CD8-positive, alpha-beta T cell (primary cell): ENCODE measurements at regions of chr1 and their contacts with region 1.

Region 1: DNA sequence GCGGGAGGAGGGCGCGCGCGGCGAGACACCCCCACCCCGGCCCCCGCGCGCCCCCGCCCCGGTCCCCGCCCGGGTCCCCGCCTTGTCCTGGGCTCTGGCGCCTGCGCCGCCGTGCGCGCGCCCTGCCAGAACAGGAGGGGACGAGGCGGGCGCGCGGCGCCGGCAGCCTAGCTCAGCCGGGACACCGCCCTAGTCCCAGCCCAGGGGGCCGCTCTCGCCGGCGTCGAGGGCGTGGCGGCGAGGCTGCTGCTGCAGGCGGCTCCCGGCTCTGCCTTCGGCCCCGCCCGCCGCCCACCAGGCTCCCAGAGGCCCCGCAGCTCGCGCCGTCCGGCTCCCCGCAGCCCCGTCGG is at the start of gene RCAN3:
- DNase-seq: peak; percentile 78 to 95 (median 88)
- ATAC-seq: peak; percentile 63
- H3K4me3 ChIP-seq: peak within 1 kb of the TSS; percentile 73 to 76
- H3K4me3 Mint-ChIP-seq: peak within 1 kb of the TSS; percentile 99
- H3K27ac ChIP-seq: peak within 1 kb of the TSS; percentile 82 to 95
- H3K27ac Mint-ChIP-seq: peak within 1 kb of the TSS; percentile 99
- H3K4me1 ChIP-seq: peaks cover 47% of the 10 kb centered on the region
- H3K4me1 Mint-ChIP-seq: peaks cover 70% of the 10 kb centered on the region
- H3K27me3 ChIP-seq: no peaks in the 10 kb centered on the region
- H3K27me3 Mint-ChIP-seq: no peaks in the 10 kb centered on the region
- CTCF ChIP-seq: no peak
- total RNA-seq, gene RCAN3: 129 to 130 TPM

Region 2: DNA sequence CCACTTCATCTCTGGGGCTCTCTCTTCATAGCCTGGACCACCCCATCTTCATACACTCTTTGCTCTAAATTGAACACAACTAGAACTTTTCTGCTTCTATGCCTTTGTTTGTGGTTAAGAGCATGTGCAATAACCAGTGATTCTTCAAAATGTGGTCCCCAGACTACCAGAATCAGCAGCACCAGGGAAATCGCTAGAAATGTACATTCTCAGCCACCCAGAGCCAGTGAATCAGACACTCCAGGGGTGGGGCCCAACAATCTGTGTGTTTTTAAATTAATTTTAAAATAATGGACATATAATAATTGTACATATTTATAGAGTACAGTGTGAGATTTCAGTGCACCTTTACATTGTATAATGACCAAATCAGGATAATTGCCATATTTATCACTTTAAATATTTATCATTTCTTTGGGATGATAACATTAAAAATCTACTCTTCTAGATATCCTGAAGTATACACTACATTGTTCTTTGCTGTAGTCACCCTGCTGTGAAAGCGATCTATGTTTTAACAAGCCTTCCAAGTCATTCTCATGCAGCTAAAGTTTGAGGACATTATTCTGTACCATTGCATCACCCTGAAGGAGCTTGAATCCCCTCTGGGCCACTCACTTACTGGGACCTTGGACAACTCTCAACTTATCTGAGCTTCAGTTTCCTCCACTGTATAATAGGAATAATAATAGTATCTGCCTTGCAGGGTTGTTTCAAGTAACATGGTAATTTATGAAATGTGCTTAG is 172.7 kb before region 1 on chr1:
- CTCF ChIA-PET with region 1: no interaction called
- POLR2A ChIA-PET with region 1: no interaction called
- intact Hi-C with region 1: no loop called
- DNase-seq: no peak
- ATAC-seq: no peak
- H3K4me3 ChIP-seq: no peak overlapping the region
- H3K4me3 Mint-ChIP-seq: no peak overlapping the region
- H3K27ac ChIP-seq: no peak overlapping the region
- H3K27ac Mint-ChIP-seq: no peak overlapping the region
- H3K4me1 ChIP-seq: no peaks in the 10 kb centered on the region
- H3K4me1 Mint-ChIP-seq: no peaks in the 10 kb centered on the region
- H3K27me3 ChIP-seq: no peaks in the 10 kb centered on the region
- H3K27me3 Mint-ChIP-seq: no peaks in the 10 kb centered on the region
- CTCF ChIP-seq: no peak

Region 3: GRCh38 chr1:24438423-24438901 is 64.2 kb before region 1 on chr1:
- CTCF ChIA-PET with region 1: no interaction called
- POLR2A ChIA-PET with region 1: no interaction called
- intact Hi-C with region 1: no loop called
- DNase-seq: no peak
- ATAC-seq: no peak
- H3K4me3 ChIP-seq: no peak overlapping the region
- H3K4me3 Mint-ChIP-seq: no peak overlapping the region
- H3K27ac ChIP-seq: no peak overlapping the region
- H3K27ac Mint-ChIP-seq: peak overlapping the region; percentile 72
- H3K4me1 ChIP-seq: peaks cover 4% of the 10 kb centered on the region
- H3K4me1 Mint-ChIP-seq: peaks cover 32% of the 10 kb centered on the region
- H3K27me3 ChIP-seq: no peaks in the 10 kb centered on the region
- H3K27me3 Mint-ChIP-seq: no peaks in the 10 kb centered on the region
- CTCF ChIP-seq: no peak

Region 4: GRCh38 chr1:24463776-24464735 is 38.6 kb before region 1 on chr1:
- CTCF ChIA-PET with region 1: no interaction called
- POLR2A ChIA-PET with region 1: interaction called, 9 read pairs
- intact Hi-C with region 1: loop called in 1 of 2 experiments (anchors 5 kb)
- DNase-seq: no peak
- ATAC-seq: no peak
- H3K4me3 ChIP-seq: no peak overlapping the region
- H3K4me3 Mint-ChIP-seq: peak overlapping the region; percentile 49
- H3K27ac ChIP-seq: peak overlapping the region in 1 of 2 experiments; percentile 10
- H3K27ac Mint-ChIP-seq: peak overlapping the region; percentile 89
- H3K4me1 ChIP-seq: peaks cover 14% of the 10 kb centered on the region
- H3K4me1 Mint-ChIP-seq: peaks cover 23% of the 10 kb centered on the region
- H3K27me3 ChIP-seq: no peaks in the 10 kb centered on the region
- H3K27me3 Mint-ChIP-seq: no peaks in the 10 kb centered on the region
- CTCF ChIP-seq: no peak

Region 5: GRCh38 chr1:24486331-24487065 is 16.2 kb before region 1 on chr1:
- CTCF ChIA-PET with region 1: interaction called, 24 read pairs
- POLR2A ChIA-PET with region 1: interaction called, 148 read pairs
- intact Hi-C with region 1: loop called (anchors 1 kb)
- DNase-seq: peak in 7 of 9 experiments; percentile 9 to 80 (median 53)
- ATAC-seq: peak; percentile 30
- H3K4me3 ChIP-seq: peak overlapping the region in 1 of 2 experiments; percentile 3
- H3K4me3 Mint-ChIP-seq: peak overlapping the region; percentile 50
- H3K27ac ChIP-seq: peak overlapping the region; percentile 29 to 41
- H3K27ac Mint-ChIP-seq: peak overlapping the region; percentile 98
- H3K4me1 ChIP-seq: peaks cover 82% of the 10 kb centered on the region
- H3K4me1 Mint-ChIP-seq: peaks cover 72% of the 10 kb centered on the region
- H3K27me3 ChIP-seq: no peaks in the 10 kb centered on the region
- H3K27me3 Mint-ChIP-seq: no peaks in the 10 kb centered on the region
- CTCF ChIP-seq: no peak

Region 6: DNA sequence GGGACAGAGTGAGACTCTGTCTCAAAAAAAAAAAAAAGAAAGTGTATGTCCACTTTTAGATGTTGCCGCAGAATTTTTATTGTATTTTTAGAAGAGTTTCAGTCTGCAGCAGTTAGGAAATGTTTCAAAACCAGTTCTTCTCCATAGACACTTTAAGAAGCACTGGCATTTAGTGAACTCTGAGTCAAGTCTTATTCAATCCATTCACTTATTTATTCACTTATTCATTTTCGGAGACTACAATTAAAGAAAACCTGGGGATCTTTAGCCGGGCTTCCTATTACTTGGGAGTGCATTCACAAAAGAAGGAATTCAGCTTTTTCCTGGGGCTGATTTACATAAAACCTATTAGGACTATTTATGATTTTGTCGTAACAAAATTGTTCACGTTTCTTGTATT is 12.3 kb after region 1 on chr1:
- CTCF ChIA-PET with region 1: interaction called, 5 read pairs
- POLR2A ChIA-PET with region 1: interaction called, 16 read pairs
- intact Hi-C with region 1: no loop called
- DNase-seq: no peak
- ATAC-seq: no peak
- H3K4me3 ChIP-seq: no peak overlapping the region
- H3K4me3 Mint-ChIP-seq: peak overlapping the region; percentile 12
- H3K27ac ChIP-seq: no peak overlapping the region
- H3K27ac Mint-ChIP-seq: peak overlapping the region; percentile 81
- H3K4me1 ChIP-seq: peaks cover 68% of the 10 kb centered on the region
- H3K4me1 Mint-ChIP-seq: peaks cover 71% of the 10 kb centered on the region
- H3K27me3 ChIP-seq: no peaks in the 10 kb centered on the region
- H3K27me3 Mint-ChIP-seq: no peaks in the 10 kb centered on the region
- CTCF ChIP-seq: no peak

Region 7: DNA sequence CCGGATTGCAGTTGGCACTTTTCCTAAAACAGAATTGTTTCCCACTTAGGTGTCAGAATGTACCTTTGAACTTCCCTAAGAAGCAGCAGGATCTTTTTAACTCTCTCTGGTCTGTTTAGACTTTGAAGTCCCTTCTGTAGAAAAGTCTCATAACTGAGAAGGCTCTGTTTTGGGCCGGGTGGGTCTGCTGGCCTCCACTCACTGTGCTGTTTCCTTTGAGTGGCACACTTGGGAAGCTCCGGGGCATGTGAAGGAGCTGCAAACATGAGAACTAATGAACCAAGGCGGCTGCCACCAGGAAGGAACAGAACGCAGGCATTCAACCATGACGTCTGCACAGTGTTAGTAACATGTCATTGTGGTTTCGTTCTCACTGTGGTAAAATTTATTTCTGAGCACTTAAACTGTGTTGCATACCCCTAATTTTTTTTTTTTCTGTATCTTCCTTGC is 33.7 kb after region 1 on chr1:
- CTCF ChIA-PET with region 1: interaction called, 9 read pairs
- POLR2A ChIA-PET with region 1: interaction called, 12 read pairs
- intact Hi-C with region 1: loop called (anchors 1 kb)
- DNase-seq: peak; percentile 54 to 96 (median 69)
- ATAC-seq: peak; percentile 77
- H3K4me3 ChIP-seq: no peak overlapping the region
- H3K4me3 Mint-ChIP-seq: peak overlapping the region; percentile 83
- H3K27ac ChIP-seq: peak overlapping the region; percentile 86
- H3K27ac Mint-ChIP-seq: peak overlapping the region; percentile 99
- H3K4me1 ChIP-seq: peaks cover 60% of the 10 kb centered on the region
- H3K4me1 Mint-ChIP-seq: peaks cover 73% of the 10 kb centered on the region
- H3K27me3 ChIP-seq: no peaks in the 10 kb centered on the region
- H3K27me3 Mint-ChIP-seq: no peaks in the 10 kb centered on the region
- CTCF ChIP-seq: no peak

Region 8: GRCh38 chr1:24642481-24643361 is 140.0 kb after region 1 on chr1 and contains the start of gene SRRM1:
- CTCF ChIA-PET with region 1: no interaction called
- POLR2A ChIA-PET with region 1: no interaction called
- intact Hi-C with region 1: loop called (anchors 1 kb)
- DNase-seq: peak; percentile 96 to 100 (median 98)
- ATAC-seq: peak; percentile 86
- H3K4me3 ChIP-seq: peak within 1 kb of the TSS; percentile 89 to 98
- H3K4me3 Mint-ChIP-seq: peak within 1 kb of the TSS; percentile 88
- H3K27ac ChIP-seq: peak within 1 kb of the TSS; percentile 98 to 100
- H3K27ac Mint-ChIP-seq: peak within 1 kb of the TSS; percentile 99
- H3K4me1 ChIP-seq: peaks cover 32% of the 10 kb centered on the region
- H3K4me1 Mint-ChIP-seq: peaks cover 41% of the 10 kb centered on the region
- H3K27me3 ChIP-seq: no peaks in the 10 kb centered on the region
- H3K27me3 Mint-ChIP-seq: no peaks in the 10 kb centered on the region
- CTCF ChIP-seq: no peak
- total RNA-seq, gene SRRM1: 460 to 474 TPM

Region 9: GRCh38 chr1:25022361-25023189 is 519.9 kb after region 1 on chr1:
- CTCF ChIA-PET with region 1: no interaction called
- POLR2A ChIA-PET with region 1: no interaction called
- intact Hi-C with region 1: loop called in 1 of 2 experiments (anchors 10 kb)
- DNase-seq: peak; percentile 91 to 100 (median 95)
- ATAC-seq: peak; percentile 83
- H3K4me3 ChIP-seq: peak overlapping the region; percentile 43 to 45
- H3K4me3 Mint-ChIP-seq: peak overlapping the region; percentile 58
- H3K27ac ChIP-seq: peak overlapping the region; percentile 83 to 100
- H3K27ac Mint-ChIP-seq: peak overlapping the region; percentile 93
- H3K4me1 ChIP-seq: peaks cover 90% of the 10 kb centered on the region
- H3K4me1 Mint-ChIP-seq: peaks cover 88% of the 10 kb centered on the region
- H3K27me3 ChIP-seq: no peaks in the 10 kb centered on the region
- H3K27me3 Mint-ChIP-seq: no peaks in the 10 kb centered on the region
- CTCF ChIP-seq: no peak